Psoas muscle (tissue), 8 donors: ENCODE measurements at regions of chrX and their contacts with region 1.

Region 1: DNA sequence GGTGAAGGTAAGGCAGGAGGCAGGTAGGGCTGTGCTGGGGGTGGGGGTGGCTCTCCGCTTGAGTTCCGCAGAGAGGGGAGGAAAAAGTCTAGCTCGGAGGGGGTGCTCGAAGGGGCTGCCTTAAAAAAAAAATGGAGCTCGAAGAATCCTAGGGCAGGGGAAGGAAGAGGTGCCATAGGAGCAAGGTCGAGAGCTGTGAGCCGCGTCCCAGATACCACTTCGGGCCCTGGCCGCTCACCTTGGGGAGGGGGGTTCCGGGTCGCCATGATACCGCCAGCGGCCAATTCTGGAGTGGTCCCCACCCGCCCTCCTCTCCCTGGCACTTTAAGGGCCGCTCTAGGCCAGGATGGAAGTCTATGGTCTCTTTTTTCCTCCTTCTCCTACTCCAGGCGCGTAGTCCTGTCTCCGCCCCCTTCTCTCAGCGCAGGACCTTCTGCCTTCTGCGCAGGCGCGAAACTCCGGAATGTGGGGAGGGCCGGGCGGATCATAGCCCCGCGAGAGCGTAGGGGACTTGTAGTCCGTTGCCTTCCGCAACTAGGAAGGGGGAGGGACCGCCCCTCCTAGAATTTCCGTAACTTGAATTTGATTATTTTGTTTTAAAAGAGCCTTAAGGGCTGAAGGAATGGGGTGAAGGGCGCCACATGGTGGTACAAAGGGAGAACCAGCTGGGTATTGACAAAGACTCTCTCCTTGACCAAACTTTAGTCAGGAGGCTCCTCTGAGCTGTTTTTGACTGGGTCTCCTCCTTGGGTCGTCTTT is at the start of gene FUNDC1:
- DNase-seq: peak; percentile 94 to 97
- ATAC-seq: peak; percentile 99 to 100 (median 99)
- H3K4me3 ChIP-seq: peak within 1 kb of the TSS; percentile 67
- H3K27ac ChIP-seq: peak within 1 kb of the TSS; percentile 54
- H3K4me1 ChIP-seq: no peaks in the 10 kb centered on the region
- H3K27me3 ChIP-seq: no peaks in the 10 kb centered on the region
- CTCF ChIP-seq: peak; percentile 30
- total RNA-seq, gene FUNDC1: 6.2 to 12.1 (median 7.9) TPM

Region 2: DNA sequence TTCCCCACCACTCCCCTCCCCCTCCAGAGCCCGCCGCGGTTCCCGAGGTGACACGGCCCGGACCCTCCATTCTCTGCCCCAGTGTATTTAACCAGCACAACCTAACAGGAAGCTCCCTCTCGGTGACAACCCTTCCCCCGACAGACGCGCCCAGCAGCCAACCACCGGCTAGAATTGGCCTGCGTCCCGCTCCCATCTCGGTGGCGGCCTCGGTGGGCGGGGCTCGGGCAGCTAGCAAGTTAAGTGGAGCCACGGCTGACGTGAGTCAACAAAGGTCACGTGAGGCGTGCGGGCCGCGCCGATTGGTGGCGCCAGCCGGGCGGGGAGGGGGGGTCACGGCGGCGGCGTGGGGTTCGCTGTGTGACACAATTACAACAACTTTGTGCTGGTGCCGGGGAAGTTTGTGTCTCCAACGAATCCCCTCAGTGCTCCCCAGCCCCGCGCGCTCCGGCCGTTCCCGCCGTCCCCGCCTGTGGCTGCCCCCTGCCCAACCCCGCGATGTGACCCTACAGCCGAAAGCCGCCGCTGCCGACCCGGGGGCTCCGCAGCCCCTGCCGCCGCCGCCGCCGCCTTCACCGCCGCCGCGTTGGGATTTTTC is 330.2 kb after region 1 on chrX and contains the start of gene KDM6A:
- intact Hi-C with region 1: loop called in 1 of 2 experiments (anchors 10 kb)
- DNase-seq: peak; percentile 99 to 100
- ATAC-seq: peak; percentile 89 to 93 (median 92)
- H3K4me3 ChIP-seq: peak within 1 kb of the TSS; percentile 88
- H3K27ac ChIP-seq: peak within 1 kb of the TSS; percentile 92
- H3K4me1 ChIP-seq: peaks cover 24% of the 10 kb centered on the region
- H3K27me3 ChIP-seq: no peaks in the 10 kb centered on the region
- CTCF ChIP-seq: no peak
- total RNA-seq, gene KDM6A: 13.2 to 21.3 (median 15.9) TPM

Region 3: DNA sequence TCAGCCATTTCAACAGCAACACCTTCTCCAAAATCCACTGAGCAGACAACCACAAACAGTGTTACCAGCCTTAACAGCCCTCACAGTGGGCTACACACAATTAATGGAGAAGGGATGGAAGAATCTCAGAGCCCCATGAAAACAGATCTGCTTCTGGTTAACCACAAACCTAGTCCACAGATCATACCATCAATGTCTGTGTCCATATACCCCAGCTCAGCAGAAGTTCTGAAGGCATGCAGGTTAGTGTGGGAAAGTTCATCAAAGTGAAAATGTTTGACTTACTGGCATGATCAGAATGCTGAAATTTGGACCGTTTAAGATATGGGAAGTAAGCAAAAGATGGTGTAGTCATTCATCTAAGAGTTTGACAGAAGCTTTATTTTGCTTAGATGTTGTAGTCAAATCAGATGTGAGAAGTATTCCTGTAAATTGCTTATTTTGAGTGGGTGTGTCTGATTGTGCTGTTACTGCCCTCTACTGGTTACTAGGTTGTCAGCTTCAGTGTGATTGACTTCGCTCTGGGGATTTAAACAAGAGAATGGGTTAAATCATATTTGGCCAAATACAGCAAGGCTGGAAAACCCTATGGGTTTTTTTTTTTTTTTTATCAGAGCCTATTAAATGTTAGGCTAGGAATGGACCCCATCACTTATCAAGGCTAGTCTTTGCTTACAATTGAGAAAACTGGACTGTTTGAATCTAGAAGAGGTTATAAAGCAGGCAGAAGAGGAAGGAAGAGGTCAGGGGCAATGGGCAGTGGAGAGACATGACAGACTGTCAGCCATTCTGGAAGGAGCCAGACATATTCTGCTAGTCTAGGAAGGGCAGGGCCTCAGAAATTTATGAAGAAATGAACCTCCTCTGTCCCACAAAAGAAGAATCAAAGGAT is 527.6 kb after region 1 on chrX:
- intact Hi-C with region 1: loop called in 1 of 2 experiments (anchors 5 kb)
- DNase-seq: no peak
- ATAC-seq: peak in 3 of 4 donors; percentile 51 to 78 (median 73)
- H3K4me3 ChIP-seq: no peak overlapping the region
- H3K27ac ChIP-seq: no peak overlapping the region
- H3K4me1 ChIP-seq: peaks cover 7% of the 10 kb centered on the region
- H3K27me3 ChIP-seq: no peaks in the 10 kb centered on the region
- CTCF ChIP-seq: peak; percentile 69